ENCODE measurements at regions of chr1 and their contacts with region 1.

Region 1: GRCh38 chr1:154873321-154873950 is 3.4 kb upstream of the KCNN3 start:
- DNase-seq: no peak
- ATAC-seq: no peak
- H3K4me3 ChIP-seq: no peak overlapping the region
- H3K4me3 Mint-ChIP-seq: no peak overlapping the region
- H3K27ac ChIP-seq: no peak overlapping the region
- H3K27ac Mint-ChIP-seq: no peak overlapping the region
- H3K4me1 ChIP-seq: peaks cover 8% of the 10 kb centered on the region
- H3K4me1 Mint-ChIP-seq: peaks cover 16% of the 10 kb centered on the region
- H3K27me3 ChIP-seq: peaks cover 6 to 17% of the 10 kb centered on the region in 2 experiments
- H3K27me3 Mint-ChIP-seq: peaks cover 26% of the 10 kb centered on the region
- CTCF ChIP-seq: no peak

Region 2: DNA sequence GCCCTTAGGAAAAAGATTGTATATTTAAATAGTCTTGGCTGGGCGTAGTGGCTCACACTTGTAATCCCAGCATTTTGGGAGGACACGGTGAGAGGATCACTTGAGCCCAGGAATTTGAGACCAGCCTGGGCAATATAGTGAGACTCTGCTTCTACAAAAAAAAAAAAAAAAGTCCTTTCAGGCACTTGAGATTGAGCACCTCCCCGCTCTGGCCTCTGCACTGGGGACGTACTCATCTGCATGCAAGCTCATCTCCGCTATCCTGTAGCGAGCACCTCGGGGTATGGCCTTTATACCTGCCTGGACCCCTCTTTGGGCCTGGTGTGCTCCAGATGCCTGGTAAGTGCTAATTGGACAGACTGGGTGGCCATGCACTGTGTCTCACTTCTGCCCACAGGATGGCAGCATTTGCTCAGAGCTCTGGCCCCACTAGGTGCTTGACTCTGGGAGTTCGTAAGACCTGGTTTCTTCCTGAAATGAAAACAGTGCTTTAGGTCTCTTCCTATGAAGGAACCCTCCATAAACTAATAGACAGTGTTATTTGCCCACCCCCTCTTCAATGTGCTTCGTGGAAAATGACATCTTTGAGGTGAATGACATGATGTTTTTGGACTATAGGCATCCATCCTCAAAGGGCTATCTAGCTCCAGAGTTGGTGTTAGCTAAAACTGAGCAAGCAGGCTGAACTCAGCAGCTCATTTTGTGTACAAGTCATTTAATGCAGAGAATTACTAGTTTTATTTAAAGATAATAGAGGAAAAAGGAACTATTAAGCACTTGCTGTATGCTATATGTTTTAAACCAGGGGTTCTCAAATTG is 203.8 kb before region 1 on chr1:
- CTCF ChIA-PET with region 1: interaction called, 51 read pairs
- POLR2A ChIA-PET with region 1: interaction called, 4 read pairs
- intact Hi-C with region 1: loop called (anchors 1 kb)
- DNase-seq: peak; percentile 48 to 86 (median 74)
- ATAC-seq: peak; percentile 100
- H3K4me3 ChIP-seq: no peak overlapping the region
- H3K4me3 Mint-ChIP-seq: no peak overlapping the region
- H3K27ac ChIP-seq: no peak overlapping the region
- H3K27ac Mint-ChIP-seq: no peak overlapping the region
- H3K4me1 ChIP-seq: peaks cover 3% of the 10 kb centered on the region
- H3K4me1 Mint-ChIP-seq: no peaks in the 10 kb centered on the region
- H3K27me3 ChIP-seq: no peaks in the 10 kb centered on the region
- H3K27me3 Mint-ChIP-seq: no peaks in the 10 kb centered on the region
- CTCF ChIP-seq: peak; percentile 80

Region 3: GRCh38 chr1:155070721-155071569 is 197.5 kb after region 1 on chr1:
- CTCF ChIA-PET with region 1: no interaction called
- POLR2A ChIA-PET with region 1: no interaction called
- intact Hi-C with region 1: no loop called
- DNase-seq: peak; percentile 55 to 91 (median 80)
- ATAC-seq: peak; percentile 99
- H3K4me3 ChIP-seq: peak overlapping the region; percentile 41 to 55
- H3K4me3 Mint-ChIP-seq: peak overlapping the region; percentile 54
- H3K27ac ChIP-seq: peak overlapping the region; percentile 43 to 53
- H3K27ac Mint-ChIP-seq: no peak overlapping the region
- H3K4me1 ChIP-seq: peaks cover 30% of the 10 kb centered on the region
- H3K4me1 Mint-ChIP-seq: peaks cover 32% of the 10 kb centered on the region
- H3K27me3 ChIP-seq: no peaks in the 10 kb centered on the region
- H3K27me3 Mint-ChIP-seq: no peaks in the 10 kb centered on the region
- CTCF ChIP-seq: peak; percentile 51